AG04449 (cell line): ENCODE measurements at regions of chr1 and their contacts with region 1.

Region 1: GRCh38 chr1:55140546-55140983 is 74.6 kb downstream of the USP24 start:
- DNase-seq: peak; percentile 86
- H3K4me3 ChIP-seq: no peak overlapping the region
- CTCF ChIP-seq: peak; percentile 78

Region 2: GRCh38 chr1:55129194-55129728 is 11.3 kb before region 1 on chr1:
- CTCF ChIA-PET with region 1: interaction called, 27 read pairs
- POLR2A ChIA-PET with region 1: no interaction called
- DNase-seq: peak; percentile 10
- H3K4me3 ChIP-seq: no peak overlapping the region
- CTCF ChIP-seq: no peak

Region 3: DNA sequence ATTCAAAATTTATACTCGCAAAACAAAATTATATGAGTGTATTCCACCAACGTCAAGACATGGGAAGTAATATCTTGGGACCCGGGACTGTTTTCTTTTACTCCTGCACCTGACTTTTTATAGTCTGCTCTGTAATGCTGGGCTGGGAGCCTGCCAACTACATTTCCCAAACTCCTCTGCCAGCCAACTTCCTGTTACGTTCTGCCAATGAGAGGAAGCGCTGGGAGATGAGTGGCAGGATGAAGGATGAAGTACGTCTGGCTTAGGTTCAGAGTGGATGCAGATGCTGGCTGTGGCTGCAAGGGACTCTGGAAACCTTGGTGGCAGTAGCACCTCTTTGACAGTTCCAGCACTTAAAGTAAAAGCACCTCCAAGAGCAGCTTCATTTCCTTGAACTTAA is 14.9 kb after region 1 on chr1:
- CTCF ChIA-PET with region 1: interaction called, 19 read pairs
- POLR2A ChIA-PET with region 1: no interaction called
- DNase-seq: no peak
- H3K4me3 ChIP-seq: no peak overlapping the region
- CTCF ChIP-seq: no peak

Region 4: DNA sequence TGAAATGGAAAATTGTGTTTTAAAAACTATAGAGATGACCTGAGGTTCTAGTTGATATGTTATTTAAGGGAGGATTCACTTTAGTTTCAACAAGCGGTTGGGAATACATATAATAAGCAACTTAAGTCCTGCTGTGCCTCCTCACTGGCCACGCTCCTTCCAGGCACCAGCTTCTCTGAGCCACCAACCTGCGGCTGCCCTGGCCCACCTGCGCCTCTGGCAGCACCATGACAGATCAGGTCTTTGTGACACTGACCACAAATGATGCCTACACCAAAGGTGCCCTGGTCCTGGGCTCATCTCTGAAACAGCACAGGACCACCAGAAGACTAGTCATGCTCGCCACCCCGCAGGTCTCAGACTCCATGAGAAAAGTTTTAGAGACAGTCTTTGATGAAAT is 81.6 kb after region 1 on chr1:
- CTCF ChIA-PET with region 1: no interaction called
- POLR2A ChIA-PET with region 1: no interaction called
- DNase-seq: no peak
- H3K4me3 ChIP-seq: no peak overlapping the region
- CTCF ChIP-seq: no peak